HCT116 (cell line): ENCODE measurements at regions of chr14 and their contacts with region 1.

Region 1: DNA sequence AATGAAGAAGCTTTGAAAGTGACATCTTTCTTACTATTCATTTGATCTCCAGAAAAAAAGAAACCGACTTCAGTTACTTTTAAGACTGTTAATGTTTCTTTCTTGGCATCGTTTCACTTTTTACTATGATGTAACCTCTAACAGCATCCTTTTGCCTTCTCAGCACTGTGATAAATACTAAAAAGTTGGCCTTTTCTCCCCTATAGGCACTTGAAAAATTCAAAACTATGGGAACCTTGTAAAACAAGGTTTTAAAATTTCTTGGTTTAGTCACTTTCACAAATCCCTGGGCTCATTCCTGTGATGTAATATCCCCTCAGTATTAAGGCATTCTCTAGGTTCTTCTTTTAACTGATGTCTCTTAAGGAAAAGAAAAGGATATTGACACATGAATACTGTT is 281.8 kb downstream of the EGLN3 start:
- DNase-seq: no peak
- ATAC-seq: no peak
- H3K4me3 ChIP-seq: no peak overlapping the region
- H3K27ac ChIP-seq: no peak overlapping the region
- H3K4me1 ChIP-seq: no peaks in the 10 kb centered on the region
- H3K27me3 ChIP-seq: no peaks in the 10 kb centered on the region; the same call in 1 of the 2 replicates
- CTCF ChIP-seq: no peak
- POLR2A ChIP-seq: no peak
- RAD21 ChIP-seq: no peak

Region 2: GRCh38 chr14:33682740-33683139 is 13.6 kb after region 1 on chr14:
- CTCF ChIA-PET with region 1: no interaction called
- POLR2A ChIA-PET with region 1: no interaction called
- RAD21 ChIA-PET with region 1: no interaction called
- intact Hi-C with region 1: loop called (anchors 1 kb)
- DNase-seq: no peak
- ATAC-seq: no peak
- H3K4me3 ChIP-seq: no peak overlapping the region
- H3K27ac ChIP-seq: no peak overlapping the region
- H3K4me1 ChIP-seq: no peaks in the 10 kb centered on the region
- H3K27me3 ChIP-seq: no peaks in the 10 kb centered on the region
- CTCF ChIP-seq: no peak
- POLR2A ChIP-seq: no peak
- RAD21 ChIP-seq: no peak

Region 3: DNA sequence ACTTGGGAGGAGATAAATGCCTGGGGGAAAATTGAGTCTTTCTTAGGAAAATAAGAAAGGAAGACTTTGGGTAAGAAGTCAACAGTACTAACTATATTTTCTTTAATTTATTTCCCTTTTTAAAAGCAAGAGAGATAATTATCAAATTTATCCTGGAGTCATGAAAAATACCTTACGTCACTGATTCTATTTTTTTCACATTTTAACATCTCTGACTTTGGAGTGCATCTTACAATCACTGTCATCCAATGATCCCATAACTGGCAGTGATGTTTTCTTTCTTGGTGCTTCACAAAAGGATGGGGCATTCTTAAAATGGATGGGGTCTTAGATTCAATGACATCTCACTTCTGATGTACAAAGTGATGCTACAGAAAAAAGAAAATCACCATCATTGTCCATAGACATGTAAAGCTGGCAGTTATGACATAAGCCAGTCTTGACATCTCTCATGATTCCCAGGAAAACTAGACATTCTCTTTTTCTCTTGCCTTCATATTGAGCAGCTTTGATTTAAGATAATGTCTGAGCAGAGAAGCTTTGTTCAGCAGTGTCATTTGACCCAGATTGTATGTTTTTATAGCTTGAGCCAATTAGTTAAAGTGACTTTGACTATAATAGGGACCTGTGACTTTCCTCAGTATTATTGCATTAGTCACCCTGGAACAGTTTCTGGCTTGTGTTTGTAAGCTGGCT is 45.6 kb after region 1 on chr14:
- CTCF ChIA-PET with region 1: no interaction called
- POLR2A ChIA-PET with region 1: no interaction called
- RAD21 ChIA-PET with region 1: no interaction called
- intact Hi-C with region 1: no loop called
- DNase-seq: no peak
- ATAC-seq: no peak
- H3K4me3 ChIP-seq: no peak overlapping the region
- H3K27ac ChIP-seq: no peak overlapping the region
- H3K4me1 ChIP-seq: no peaks in the 10 kb centered on the region
- H3K27me3 ChIP-seq: peaks cover 14% of the 10 kb centered on the region
- CTCF ChIP-seq: no peak
- POLR2A ChIP-seq: no peak
- RAD21 ChIP-seq: no peak